Prostate gland (tissue), 2 donors: ENCODE measurements at regions of chr11 and their contacts with region 1.

Region 1: GRCh38 chr11:83071567-83072349 is at the start of gene RAB30:
- DNase-seq: peak; percentile 99
- H3K4me3 ChIP-seq: peak within 1 kb of the TSS; percentile 84 to 90
- H3K27ac ChIP-seq: peak within 1 kb of the TSS; percentile 94 to 95
- H3K4me1 ChIP-seq: peaks cover 3% of the 10 kb centered on the region
- H3K27me3 ChIP-seq: no peaks in the 10 kb centered on the region
- CTCF ChIP-seq: peak in 2 of 4 experiments; percentile 5 to 18
- POLR2A ChIP-seq: peak; percentile 92
- total RNA-seq, gene RAB30: 13.3 to 15.9 TPM

Region 2: GRCh38 chr11:83156150-83156995 is 84.6 kb after region 1 on chr11:
- intact Hi-C with region 1: loop called (anchors 2 kb)
- DNase-seq: peak; percentile 99
- H3K4me3 ChIP-seq: peak overlapping the region; percentile 46 to 98
- H3K27ac ChIP-seq: peak overlapping the region; percentile 100
- H3K4me1 ChIP-seq: no peaks in the 10 kb centered on the region
- H3K27me3 ChIP-seq: no peaks in the 10 kb centered on the region
- CTCF ChIP-seq: peak in 1 of 4 experiments; percentile 19
- POLR2A ChIP-seq: peak; percentile 69

Region 3: DNA sequence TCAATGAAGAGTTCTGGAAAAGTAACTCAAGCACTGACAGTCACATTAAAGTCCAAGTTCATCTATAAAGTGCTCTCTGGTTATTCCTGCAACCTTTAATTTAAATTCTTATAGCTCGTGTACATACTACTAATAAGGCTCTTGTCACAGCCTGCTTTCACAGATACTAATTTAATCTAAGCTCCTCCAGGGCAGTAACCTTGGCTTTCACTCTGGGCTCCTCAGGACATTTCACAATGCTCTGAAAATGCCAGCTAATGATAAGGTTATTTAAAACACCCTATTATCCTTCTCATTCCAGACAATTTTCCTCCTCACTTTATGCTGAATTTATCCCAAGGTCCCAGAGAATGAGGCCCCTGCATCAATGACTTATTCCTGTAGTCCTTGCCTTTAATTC is 457.1 kb after region 1 on chr11:
- intact Hi-C with region 1: no loop called
- DNase-seq: no peak
- H3K4me3 ChIP-seq: no peak overlapping the region
- H3K27ac ChIP-seq: no peak overlapping the region
- H3K4me1 ChIP-seq: no peaks in the 10 kb centered on the region
- H3K27me3 ChIP-seq: no peaks in the 10 kb centered on the region
- CTCF ChIP-seq: no peak
- POLR2A ChIP-seq: no peak